Ascending aorta (tissue), 2 donors: ENCODE measurements at regions of chr17 and their contacts with region 1.

Region 1: GRCh38 chr17:68759343-68760132 is 158.4 kb upstream of the FAM20A start:
- DNase-seq: peak; percentile 74 to 95
- H3K4me3 ChIP-seq: peak overlapping the region; percentile 48 to 55
- H3K27ac ChIP-seq: peak overlapping the region; percentile 57 to 73
- H3K4me1 ChIP-seq: peaks cover 0 to 7% of the 10 kb centered on the region in 2 donors
- H3K27me3 ChIP-seq: no peaks in the 10 kb centered on the region
- CTCF ChIP-seq: peak; percentile 84 to 91 (median 90)

Region 2: GRCh38 chr17:68172461-68172954 is 587.0 kb before region 1 on chr17:
- intact Hi-C with region 1: loop called (anchors 10 kb)
- DNase-seq: peak in 1 of 2 donors; percentile 83
- H3K4me3 ChIP-seq: no peak overlapping the region
- H3K27ac ChIP-seq: no peak overlapping the region
- H3K4me1 ChIP-seq: no peaks in the 10 kb centered on the region
- H3K27me3 ChIP-seq: no peaks in the 10 kb centered on the region
- CTCF ChIP-seq: peak; percentile 89 to 96 (median 94)

Region 3: DNA sequence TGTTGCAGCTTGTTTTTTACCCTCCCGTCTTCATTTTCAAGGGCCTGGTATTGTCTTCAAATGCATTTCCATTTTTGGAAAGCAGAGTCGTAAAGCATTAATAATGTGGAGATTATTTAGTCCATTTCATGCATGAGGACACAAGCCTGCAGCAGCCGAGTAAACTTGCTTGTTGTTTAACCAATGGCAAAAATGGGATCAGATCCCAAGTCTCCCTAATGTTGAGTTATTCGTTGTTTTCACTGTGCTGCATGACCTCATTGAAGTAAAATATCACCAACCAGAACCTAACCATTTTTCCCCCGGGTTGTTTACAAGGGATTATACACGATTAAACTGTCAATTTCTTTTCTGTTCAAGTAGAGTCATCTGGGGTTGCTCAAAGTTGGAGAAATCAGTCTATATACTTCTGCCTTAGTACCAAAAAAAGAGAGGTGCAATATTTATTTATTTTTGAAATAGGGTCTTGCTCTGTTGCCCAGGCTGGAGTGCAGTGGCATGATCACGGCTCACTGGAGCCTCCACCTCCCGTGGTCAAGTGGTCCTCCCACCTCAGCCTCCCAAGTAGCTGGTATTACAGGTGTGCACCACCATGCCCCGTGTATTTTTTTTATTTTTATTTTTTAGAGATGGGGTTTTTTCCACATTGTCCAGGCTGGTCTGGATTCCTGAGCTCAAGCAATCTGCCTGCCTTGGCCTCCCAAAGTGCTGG is 499.3 kb before region 1 on chr17:
- intact Hi-C with region 1: loop called (anchors 5 kb)
- DNase-seq: no peak
- H3K4me3 ChIP-seq: no peak overlapping the region
- H3K27ac ChIP-seq: no peak overlapping the region
- H3K4me1 ChIP-seq: peaks cover 0 to 5% of the 10 kb centered on the region in 2 donors
- H3K27me3 ChIP-seq: no peaks in the 10 kb centered on the region
- CTCF ChIP-seq: no peak

Region 4: GRCh38 chr17:68533887-68534694 is 225.4 kb before region 1 on chr17:
- intact Hi-C with region 1: loop called (anchors 1 kb)
- DNase-seq: no peak
- H3K4me3 ChIP-seq: no peak overlapping the region
- H3K27ac ChIP-seq: no peak overlapping the region
- H3K4me1 ChIP-seq: no peaks in the 10 kb centered on the region
- H3K27me3 ChIP-seq: no peaks in the 10 kb centered on the region
- CTCF ChIP-seq: peak in 2 of 3 experiments; percentile 29 to 50

Region 5: GRCh38 chr17:68684949-68685357 is 74.6 kb before region 1 on chr17:
- intact Hi-C with region 1: no loop called
- DNase-seq: no peak
- H3K4me3 ChIP-seq: no peak overlapping the region
- H3K27ac ChIP-seq: peak overlapping the region; percentile 65 to 76
- H3K4me1 ChIP-seq: peaks cover 3 to 10% of the 10 kb centered on the region in 2 donors
- H3K27me3 ChIP-seq: no peaks in the 10 kb centered on the region
- CTCF ChIP-seq: no peak